Mammary epithelial cell (primary cell): ENCODE measurements at regions of chr1 and their contacts with region 1.

Region 1: GRCh38 chr1:21614419-21615115 is 54.6 kb downstream of the RAP1GAP start:
- DNase-seq: peak; percentile 50
- H3K4me3 ChIP-seq: no peak overlapping the region
- H3K27ac ChIP-seq: no peak overlapping the region
- H3K4me1 ChIP-seq: peaks cover 10% of the 10 kb centered on the region
- H3K27me3 ChIP-seq: no peaks in the 10 kb centered on the region
- CTCF ChIP-seq: no peak

Region 2: GRCh38 chr1:21216835-21217811 is 397.4 kb before region 1 on chr1:
- CTCF ChIA-PET with region 1: no interaction called
- dilution Hi-C with region 1: loop called (anchors 5 kb)
- in situ Hi-C with region 1: no loop called
- intact Hi-C with region 1: no loop called
- DNase-seq: peak; percentile 61
- H3K4me3 ChIP-seq: no peak overlapping the region
- H3K27ac ChIP-seq: no peak overlapping the region
- H3K4me1 ChIP-seq: peaks cover 2% of the 10 kb centered on the region
- H3K27me3 ChIP-seq: no peaks in the 10 kb centered on the region
- CTCF ChIP-seq: peak; percentile 75 to 76

Region 3: DNA sequence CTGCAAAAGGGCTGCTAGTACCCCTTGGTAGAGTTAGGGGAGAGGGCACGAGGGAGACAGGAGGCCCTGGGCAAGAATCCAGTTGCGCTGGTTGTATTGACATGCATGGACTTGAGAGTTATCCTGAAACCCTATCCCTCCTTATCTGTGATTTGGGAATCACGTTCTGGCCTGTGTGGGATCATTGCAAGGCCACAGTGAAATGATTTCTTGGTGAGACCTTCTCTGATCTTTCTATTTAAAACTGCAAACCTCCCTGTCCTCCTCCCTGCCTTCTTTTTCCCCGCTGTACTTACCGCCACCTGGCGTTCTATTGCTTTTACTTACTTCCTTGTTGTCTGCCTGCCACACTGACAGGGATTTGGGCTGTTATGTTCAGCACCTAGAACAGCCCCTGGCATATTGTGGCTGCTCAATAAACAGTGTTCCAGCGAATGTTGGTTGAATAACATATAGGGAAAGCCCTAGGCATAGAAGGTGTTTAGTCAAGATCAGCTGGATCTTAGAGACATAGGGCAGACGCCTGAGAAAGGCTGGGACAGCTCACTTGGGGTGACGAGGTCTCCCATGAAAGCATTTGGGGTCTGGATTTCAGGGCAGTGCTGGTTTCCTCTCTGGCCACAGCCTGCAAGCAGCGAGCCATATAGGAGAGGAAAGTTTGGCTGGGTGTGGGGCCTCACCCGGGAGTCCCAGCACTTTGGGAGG is 79.7 kb before region 1 on chr1:
- CTCF ChIA-PET with region 1: no interaction called
- dilution Hi-C with region 1: loop called (anchors 5 kb)
- in situ Hi-C with region 1: no loop called
- intact Hi-C with region 1: no loop called
- DNase-seq: peak; percentile 62
- H3K4me3 ChIP-seq: no peak overlapping the region
- H3K27ac ChIP-seq: no peak overlapping the region
- H3K4me1 ChIP-seq: no peaks in the 10 kb centered on the region
- H3K27me3 ChIP-seq: peaks cover 2% of the 10 kb centered on the region
- CTCF ChIP-seq: peak in 1 of 2 donors; percentile 31

Region 4: DNA sequence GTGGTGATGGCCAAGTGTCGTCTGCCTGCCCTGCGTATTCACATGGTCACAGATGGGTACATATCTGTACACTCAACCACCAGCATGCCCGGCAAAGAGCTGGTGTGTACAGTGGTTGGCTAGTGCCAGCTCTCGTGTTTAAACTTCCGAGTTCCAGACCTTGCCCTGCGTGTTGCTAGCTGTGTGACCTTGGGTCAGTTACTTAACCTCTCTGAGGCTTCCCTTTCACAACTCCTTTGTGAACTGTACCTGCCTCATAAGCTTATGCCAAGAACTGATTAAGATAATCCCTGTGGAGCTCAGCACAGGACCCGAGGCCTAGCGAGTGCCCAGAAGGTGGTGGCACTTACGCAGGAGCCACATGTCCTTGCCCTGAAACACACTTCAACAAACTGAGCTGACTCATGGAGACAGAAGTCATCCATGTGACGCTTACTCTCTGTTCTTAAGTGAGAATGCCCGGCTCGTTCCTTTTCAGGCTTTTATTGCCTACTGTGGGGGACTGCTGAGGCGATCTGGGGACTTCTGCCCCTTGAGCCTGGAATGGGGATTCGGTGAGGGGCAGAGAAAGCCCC is 50.0 kb before region 1 on chr1:
- CTCF ChIA-PET with region 1: no interaction called
- dilution Hi-C with region 1: loop called (anchors 5 kb)
- in situ Hi-C with region 1: no loop called
- intact Hi-C with region 1: no loop called
- DNase-seq: no peak
- H3K4me3 ChIP-seq: no peak overlapping the region
- H3K27ac ChIP-seq: no peak overlapping the region
- H3K4me1 ChIP-seq: peaks cover 3% of the 10 kb centered on the region
- H3K27me3 ChIP-seq: no peaks in the 10 kb centered on the region
- CTCF ChIP-seq: no peak

Region 5: DNA sequence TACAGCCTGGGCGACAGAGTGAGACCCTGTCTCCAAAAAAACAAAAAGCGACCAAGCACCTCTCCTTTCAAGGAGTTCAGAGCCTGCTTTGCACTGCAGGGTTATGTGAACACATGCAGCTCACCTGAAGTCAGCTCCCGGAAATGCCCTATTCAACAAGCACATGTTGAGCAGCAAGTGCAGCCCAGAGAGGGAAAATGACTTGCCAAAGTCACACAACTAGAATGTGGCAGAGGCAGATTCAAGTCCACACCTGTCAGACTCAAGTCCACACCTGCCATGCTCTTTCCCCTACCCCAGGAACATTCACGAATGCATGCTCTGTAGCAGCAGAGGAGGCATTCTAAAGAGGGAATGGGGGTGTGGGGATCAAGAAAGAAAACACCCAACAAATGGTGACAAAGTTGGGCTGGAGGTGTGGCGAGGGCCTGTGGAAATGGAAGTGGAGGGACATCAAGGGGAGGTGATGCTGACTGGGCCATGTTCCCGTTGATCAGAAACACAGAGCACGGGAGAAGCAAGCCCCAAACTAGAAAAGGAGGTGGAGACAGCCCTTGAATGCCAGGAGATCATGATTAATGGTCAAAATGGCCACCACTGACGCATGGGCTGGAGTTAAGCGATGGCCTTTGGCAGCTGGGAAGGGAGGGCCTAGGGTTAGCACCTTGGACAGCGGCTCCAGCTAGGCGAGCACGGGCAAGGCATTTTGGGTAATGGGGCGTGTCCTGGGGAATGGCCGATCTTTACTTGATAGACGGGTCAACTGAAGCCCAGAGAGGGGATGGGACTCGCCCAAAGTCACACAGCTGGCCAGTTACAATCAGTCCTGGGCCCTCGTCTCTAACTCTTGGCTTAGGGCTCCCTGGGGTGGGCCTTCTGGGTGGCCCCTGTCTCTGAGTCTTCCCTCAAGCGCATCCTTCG is 33.1 kb after region 1 on chr1:
- CTCF ChIA-PET with region 1: no interaction called
- dilution Hi-C with region 1: loop called (anchors 5 kb)
- in situ Hi-C with region 1: no loop called
- intact Hi-C with region 1: no loop called
- DNase-seq: peak; percentile 33
- H3K4me3 ChIP-seq: no peak overlapping the region
- H3K27ac ChIP-seq: no peak overlapping the region
- H3K4me1 ChIP-seq: peaks cover 6% of the 10 kb centered on the region
- H3K27me3 ChIP-seq: peaks cover 2% of the 10 kb centered on the region
- CTCF ChIP-seq: no peak